Left ventricle myocardium inferior (tissue), 1 donor: ENCODE measurements at regions of chr14 and their contacts with region 1.

Region 1: DNA sequence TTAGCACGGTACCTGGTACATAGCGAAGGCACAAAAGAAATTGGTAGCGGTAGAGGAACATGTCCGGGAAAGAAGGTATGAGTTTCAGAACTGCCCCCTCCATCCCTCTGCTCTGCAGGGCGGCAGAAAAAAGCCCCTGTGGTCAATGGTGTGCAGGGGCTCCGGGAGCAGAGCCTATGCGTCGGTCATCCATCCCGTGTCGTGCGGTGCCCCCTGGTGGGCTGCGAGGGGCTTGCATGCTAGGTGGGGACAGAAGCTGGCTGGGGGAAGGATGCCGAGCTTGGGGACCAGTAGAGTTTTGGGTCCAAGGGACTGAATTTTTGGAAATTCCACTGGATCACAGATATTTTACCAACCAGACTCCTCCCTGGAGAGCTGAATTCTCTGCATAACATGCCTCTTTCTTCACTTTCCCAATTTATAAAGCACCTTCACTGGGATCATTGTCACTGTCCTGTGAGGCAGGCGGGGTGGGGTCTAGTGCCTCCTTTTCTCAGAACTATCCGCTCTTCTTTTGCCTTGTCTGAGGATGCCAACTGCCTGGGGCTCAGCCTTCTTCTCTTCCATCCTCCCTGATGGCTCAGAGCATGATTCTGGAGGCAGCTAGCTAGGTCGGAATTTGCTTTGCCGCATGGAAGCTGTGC is 148.7 kb downstream of the SMOC1 start:
- DNase-seq: peak; percentile 63
- H3K4me3 ChIP-seq: no peak overlapping the region
- H3K27ac ChIP-seq: no peak overlapping the region
- H3K4me1 ChIP-seq: no peaks in the 10 kb centered on the region
- H3K27me3 ChIP-seq: peaks cover 46% of the 10 kb centered on the region
- CTCF ChIP-seq: peak; percentile 91

Region 2: GRCh38 chr14:69818757-69819191 is 209.1 kb before region 1 on chr14:
- intact Hi-C with region 1: loop called (anchors 2 kb)
- DNase-seq: no peak
- H3K4me3 ChIP-seq: no peak overlapping the region
- H3K27ac ChIP-seq: no peak overlapping the region
- H3K4me1 ChIP-seq: no peaks in the 10 kb centered on the region
- H3K27me3 ChIP-seq: peaks cover 95% of the 10 kb centered on the region
- CTCF ChIP-seq: peak; percentile 82

Region 3: DNA sequence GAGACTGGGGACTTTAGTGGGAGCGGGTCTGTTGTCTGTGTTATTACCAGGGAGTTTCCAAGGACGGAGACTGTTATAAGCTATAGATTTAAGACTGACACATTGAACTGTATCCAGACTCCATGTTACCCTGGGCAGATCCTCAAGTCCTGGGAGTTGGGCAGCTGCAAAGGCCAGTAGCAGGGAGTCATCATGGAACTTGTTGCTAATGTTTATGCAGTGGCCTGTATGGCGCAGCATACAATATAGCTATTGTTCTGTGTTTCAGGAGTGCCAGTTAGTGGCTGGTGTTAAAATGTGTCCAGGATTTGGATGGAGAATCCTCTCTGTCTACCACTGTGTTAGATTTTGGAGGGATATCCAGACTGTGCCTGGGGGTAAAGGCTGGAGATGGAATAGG is 117.0 kb before region 1 on chr14:
- intact Hi-C with region 1: no loop called
- DNase-seq: no peak
- H3K4me3 ChIP-seq: no peak overlapping the region
- H3K27ac ChIP-seq: no peak overlapping the region
- H3K4me1 ChIP-seq: no peaks in the 10 kb centered on the region
- H3K27me3 ChIP-seq: peaks cover 17% of the 10 kb centered on the region
- CTCF ChIP-seq: no peak